Heart left ventricle (tissue), 16 donors: ENCODE measurements at regions of chr2 and their contacts with region 1.

Region 1: GRCh38 chr2:98757904-98758421 is 27.0 kb upstream of the MGAT4A start:
- DNase-seq: peak; percentile 69 to 80 (median 77)
- ATAC-seq: peak; percentile 83 to 97 (median 96)
- H3K4me3 ChIP-seq: peak overlapping the region in 4 of 12 donors; percentile 2 to 15 (median 9)
- H3K27ac ChIP-seq: peak overlapping the region in 8 of 12 donors; percentile 19 to 85 (median 45)
- H3K4me1 ChIP-seq: peaks cover 0 to 76% (median 9%) of the 10 kb centered on the region in 12 donors
- H3K27me3 ChIP-seq: no peaks in the 10 kb centered on the region
- CTCF ChIP-seq: peak in 3 of 12 donors; percentile 16 to 23 (median 17)
- POLR2A ChIP-seq: no peak

Region 2: DNA sequence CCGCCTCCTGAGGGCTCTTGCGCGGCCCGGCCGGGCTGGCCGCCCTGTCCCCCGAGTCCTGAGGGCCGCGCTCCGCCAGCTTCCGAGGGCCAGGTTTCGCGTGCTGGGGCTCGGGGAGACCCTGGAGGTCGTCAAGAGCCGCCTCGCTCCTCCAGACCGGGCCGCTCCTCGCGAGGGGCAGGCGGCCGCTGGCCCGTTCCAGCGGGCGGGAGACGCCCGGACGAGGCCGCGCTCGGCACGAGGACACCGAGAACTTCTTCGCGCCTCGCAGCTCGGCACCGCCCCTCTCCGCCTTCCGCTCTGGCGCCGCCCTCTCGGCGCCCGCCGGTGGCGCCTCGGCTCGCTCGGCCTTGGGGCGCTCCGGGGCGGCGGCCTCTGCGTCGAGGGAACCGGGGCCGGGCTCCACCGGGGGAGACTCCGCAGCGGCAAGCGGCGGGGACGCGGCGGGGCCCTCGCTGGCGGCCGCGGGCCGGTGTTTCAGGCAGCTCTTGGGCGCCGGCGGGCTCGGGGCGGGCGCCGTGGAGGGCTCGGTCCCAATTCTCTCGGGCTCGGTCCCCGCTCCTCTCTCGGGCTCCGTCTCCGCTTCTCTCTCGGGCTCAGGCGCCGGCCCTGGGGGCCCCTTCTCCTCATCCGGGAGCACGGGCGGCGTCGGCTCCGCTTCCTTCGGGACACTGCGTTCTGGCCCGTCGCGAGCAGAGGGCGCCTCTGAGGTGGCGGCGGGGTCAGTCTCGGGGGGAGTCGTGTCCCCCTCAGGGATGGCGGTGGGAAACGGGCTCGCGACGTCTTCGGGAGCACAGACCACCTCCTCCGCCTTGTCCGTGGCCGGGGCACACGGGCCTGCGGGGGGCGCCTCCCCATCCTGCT is 64.6 kb after region 1 on chr2:
- intact Hi-C with region 1: loop called in 2 of 10 experiments (anchors 5 kb)
- DNase-seq: peak; percentile 74 to 87 (median 78)
- ATAC-seq: peak; percentile 77 to 89 (median 82)
- H3K4me3 ChIP-seq: peak overlapping the region; percentile 38 to 68 (median 54)
- H3K27ac ChIP-seq: peak overlapping the region; percentile 76 to 98 (median 92)
- H3K4me1 ChIP-seq: peaks cover 0 to 59% (median 31%) of the 10 kb centered on the region in 12 donors
- H3K27me3 ChIP-seq: peaks cover 0 to 7% (median 0%) of the 10 kb centered on the region in 9 donors
- CTCF ChIP-seq: peak in 9 of 12 donors; percentile 18 to 54 (median 35)
- POLR2A ChIP-seq: peak in 1 of 2 donors; percentile 28